ENCODE measurements at regions of chr2 and their contacts with region 1.

Region 1: GRCh38 chr2:26970244-26970920 is at the start of gene MAPRE3:
- DNase-seq: peak; percentile 53
- ATAC-seq: peak; percentile 94
- H3K4me3 ChIP-seq: peak within 1 kb of the TSS; percentile 44 to 62
- H3K27ac ChIP-seq: no peak within 1 kb of the TSS
- H3K4me1 ChIP-seq: peaks cover 4 to 23% of the 10 kb centered on the region in 2 experiments; a peak in 3 of 4 replicates
- H3K27me3 ChIP-seq: peaks cover 5% of the 10 kb centered on the region; the same call in 1 of the 2 replicates
- CTCF ChIP-seq: no peak
- POLR2A ChIP-seq: no peak
- RAD21 ChIP-seq: no peak
- total RNA-seq, gene MAPRE3: 12.1 TPM

Region 2: GRCh38 chr2:26764078-26764887 is 206.1 kb before region 1 on chr2 and contains the start of gene SLC35F6:
- CTCF ChIA-PET with region 1: no interaction called
- POLR2A ChIA-PET with region 1: no interaction called
- RAD21 ChIA-PET with region 1: no interaction called
- intact Hi-C with region 1: no loop called
- DNase-seq: no peak
- ATAC-seq: peak; percentile 68
- H3K4me3 ChIP-seq: peak within 1 kb of the TSS; percentile 96 to 98
- H3K27ac ChIP-seq: peak within 1 kb of the TSS; percentile 59
- H3K4me1 ChIP-seq: peaks cover 50 to 63% of the 10 kb centered on the region in 2 experiments
- H3K27me3 ChIP-seq: no peaks in the 10 kb centered on the region
- CTCF ChIP-seq: no peak
- POLR2A ChIP-seq: peak; percentile 70
- RAD21 ChIP-seq: no peak
- total RNA-seq, gene SLC35F6: 34.5 TPM

Region 3: GRCh38 chr2:27016801-27017325 is 46.5 kb after region 1 on chr2:
- CTCF ChIA-PET with region 1: interaction called, 10 read pairs
- POLR2A ChIA-PET with region 1: no interaction called
- RAD21 ChIA-PET with region 1: no interaction called
- intact Hi-C with region 1: no loop called
- DNase-seq: peak; percentile 50
- ATAC-seq: peak; percentile 74
- H3K4me3 ChIP-seq: no peak overlapping the region
- H3K27ac ChIP-seq: no peak overlapping the region
- H3K4me1 ChIP-seq: peaks cover 25 to 50% of the 10 kb centered on the region in 2 experiments
- H3K27me3 ChIP-seq: no peaks in the 10 kb centered on the region
- CTCF ChIP-seq: peak; percentile 68 to 85 (median 84)
- POLR2A ChIP-seq: no peak
- RAD21 ChIP-seq: peak; percentile 92

Region 4: DNA sequence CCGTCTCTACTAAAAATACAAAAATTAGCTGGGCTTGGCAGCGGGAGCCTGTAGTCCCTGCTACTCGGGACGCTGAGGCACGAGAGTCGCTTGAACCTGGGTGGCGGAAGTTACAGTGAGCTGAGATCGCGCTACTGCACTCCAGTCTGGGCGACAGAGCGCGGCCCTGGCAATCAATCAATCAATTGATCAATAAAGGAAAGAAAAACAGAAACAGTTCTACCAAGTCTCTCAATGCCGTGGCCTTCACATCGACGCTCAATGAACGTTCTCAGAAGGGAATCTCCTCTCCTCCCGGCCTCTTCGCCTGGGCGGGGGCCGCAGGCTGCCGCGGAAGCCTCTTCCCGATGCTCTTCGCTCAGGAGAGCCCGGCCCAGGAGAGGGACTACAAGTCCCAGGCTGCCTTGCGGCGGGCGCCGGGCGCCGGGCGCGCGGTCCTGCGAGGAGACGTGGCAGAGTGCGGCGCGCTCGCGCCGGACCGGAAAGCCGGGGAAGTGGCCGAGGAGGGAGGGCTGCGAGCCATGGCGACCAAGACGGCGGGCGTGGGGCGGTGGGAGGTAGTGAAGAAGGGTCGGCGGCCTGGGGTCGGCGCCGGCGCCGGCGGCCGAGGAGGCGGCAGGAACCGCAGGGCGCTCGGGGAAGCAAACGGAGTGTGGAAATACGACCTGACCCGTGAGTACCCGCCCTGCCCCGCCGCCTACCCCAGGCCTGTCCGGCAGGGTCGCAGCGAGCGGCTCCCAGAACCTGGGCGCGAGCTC is 62.3 kb after region 1 on chr2 and contains the start of gene TMEM214:
- CTCF ChIA-PET with region 1: no interaction called
- POLR2A ChIA-PET with region 1: no interaction called
- RAD21 ChIA-PET with region 1: no interaction called
- intact Hi-C with region 1: loop called (anchors 2 kb)
- DNase-seq: peak; percentile 71
- ATAC-seq: peak; percentile 97
- H3K4me3 ChIP-seq: peak within 1 kb of the TSS; percentile 97 to 98
- H3K27ac ChIP-seq: peak within 1 kb of the TSS; percentile 74
- H3K4me1 ChIP-seq: peaks cover 7 to 37% of the 10 kb centered on the region in 2 experiments; a peak in 3 of 4 replicates
- H3K27me3 ChIP-seq: no peaks in the 10 kb centered on the region
- CTCF ChIP-seq: no peak
- POLR2A ChIP-seq: peak; percentile 77
- RAD21 ChIP-seq: no peak
- total RNA-seq, gene TMEM214: 69.8 TPM

Region 5: DNA sequence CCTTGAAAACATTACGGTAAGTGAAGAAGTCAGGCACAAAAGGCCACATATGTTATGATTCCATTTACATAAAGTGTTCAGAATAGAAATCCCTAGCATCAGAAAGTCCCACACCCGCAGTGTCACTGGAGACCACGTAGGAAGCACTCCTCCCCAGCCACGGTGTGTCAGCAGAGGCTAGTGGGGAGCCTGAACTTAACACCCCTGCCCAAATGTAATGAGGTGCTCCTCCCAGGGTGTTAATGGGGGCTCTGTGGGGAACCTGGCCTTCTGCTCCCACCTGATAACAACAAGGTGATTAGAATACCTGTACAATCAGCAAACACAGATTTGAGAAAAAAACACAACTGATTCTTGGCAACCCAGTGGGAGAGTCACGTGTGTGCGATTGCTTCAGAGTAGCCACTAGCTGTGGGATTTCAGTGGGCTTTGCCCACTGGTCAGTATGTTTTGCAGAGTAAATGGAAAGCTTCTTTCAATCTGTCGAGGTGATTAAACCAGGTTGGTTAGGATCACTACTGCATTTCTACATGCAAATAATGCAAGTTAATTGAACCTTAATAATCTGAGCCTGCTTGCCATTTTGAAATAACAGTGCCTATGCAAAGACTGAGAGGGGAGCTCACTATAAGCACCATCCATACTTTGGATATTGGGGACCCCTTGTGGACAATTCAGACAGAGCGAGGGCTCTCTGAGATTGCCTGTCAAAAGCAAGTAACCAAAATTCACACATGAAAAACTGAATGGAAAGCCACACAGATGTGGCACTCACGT is 220.9 kb after region 1 on chr2:
- CTCF ChIA-PET with region 1: no interaction called
- POLR2A ChIA-PET with region 1: no interaction called
- RAD21 ChIA-PET with region 1: no interaction called
- intact Hi-C with region 1: loop called (anchors 10 kb)
- DNase-seq: peak; percentile 43
- ATAC-seq: peak; percentile 97
- H3K4me3 ChIP-seq: no peak overlapping the region
- H3K27ac ChIP-seq: no peak overlapping the region
- H3K4me1 ChIP-seq: no peaks in the 10 kb centered on the region
- H3K27me3 ChIP-seq: no peaks in the 10 kb centered on the region
- CTCF ChIP-seq: peak; percentile 71 to 87 (median 74)
- POLR2A ChIP-seq: no peak
- RAD21 ChIP-seq: peak; percentile 85

Measured in HCT116 (cell line).